ENCODE measurements at regions of chr1 and their contacts with region 1.

Region 1: DNA sequence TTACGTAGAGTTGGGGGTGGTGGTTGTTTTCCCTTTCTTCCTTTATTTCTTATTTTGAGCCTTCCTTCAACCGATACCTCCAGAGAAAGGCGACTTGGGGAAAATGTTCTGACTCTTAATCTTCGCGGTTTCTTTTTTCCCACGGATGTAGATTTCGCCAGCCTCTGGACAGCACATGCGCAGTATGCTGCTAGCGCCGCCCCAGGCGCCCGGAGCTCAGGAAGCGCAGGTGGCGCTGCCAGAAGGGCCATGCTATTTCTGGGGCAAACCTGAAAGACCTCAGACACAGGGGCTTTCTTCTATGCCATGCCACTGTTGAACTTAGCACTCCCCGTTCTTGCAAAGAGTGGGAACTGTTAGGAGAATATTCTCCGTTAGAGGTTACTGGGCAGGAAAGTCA is 392.1 kb downstream of the KIF26B start:
- DNase-seq: no peak
- ATAC-seq: no peak
- H3K4me3 ChIP-seq: no peak overlapping the region
- H3K27ac ChIP-seq: no peak overlapping the region
- H3K4me1 ChIP-seq: no peaks in the 10 kb centered on the region
- H3K27me3 ChIP-seq: no peaks in the 10 kb centered on the region

Region 2: GRCh38 chr1:245599371-245600174 is 52.7 kb after region 1 on chr1:
- intact Hi-C with region 1: loop called in 1 of 2 experiments (anchors 2 kb)
- DNase-seq: no peak
- ATAC-seq: no peak
- H3K4me3 ChIP-seq: no peak overlapping the region
- H3K27ac ChIP-seq: no peak overlapping the region
- H3K4me1 ChIP-seq: no peaks in the 10 kb centered on the region
- H3K27me3 ChIP-seq: no peaks in the 10 kb centered on the region

Region 3: DNA sequence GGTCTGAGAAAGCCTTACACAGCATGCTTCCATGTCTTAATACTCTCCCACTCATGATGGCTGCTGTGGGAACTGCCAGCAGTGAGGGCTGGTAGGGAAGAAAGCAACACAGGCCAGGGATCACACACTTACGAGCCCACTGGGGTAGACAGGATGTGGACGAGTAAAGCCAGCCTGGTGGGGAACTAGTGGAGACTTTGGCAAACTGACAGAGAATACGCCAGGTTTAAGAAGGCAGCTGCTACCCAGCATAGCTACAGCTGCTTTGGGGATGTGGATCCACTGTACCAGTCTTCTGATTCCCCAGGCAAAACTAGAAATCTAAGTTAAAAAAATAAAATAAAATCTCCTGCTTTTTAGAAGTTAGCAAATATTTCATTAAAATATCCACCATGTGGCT is 296.2 kb after region 1 on chr1:
- intact Hi-C with region 1: no loop called
- DNase-seq: no peak
- ATAC-seq: no peak
- H3K4me3 ChIP-seq: no peak overlapping the region
- H3K27ac ChIP-seq: no peak overlapping the region
- H3K4me1 ChIP-seq: no peaks in the 10 kb centered on the region
- H3K27me3 ChIP-seq: no peaks in the 10 kb centered on the region

Measured in aorta (tissue), 5 donors.